Panc1 (cell line): ENCODE measurements at regions of chr6 and their contacts with region 1.

Region 1: GRCh38 chr6:35230950-35231349 is 17.2 kb downstream of the SCUBE3 start:
- DNase-seq: no peak
- ATAC-seq: no peak
- H3K4me3 ChIP-seq: no peak overlapping the region
- H3K27ac ChIP-seq: no peak overlapping the region
- H3K4me1 ChIP-seq: no peaks in the 10 kb centered on the region
- H3K27me3 ChIP-seq: no peaks in the 10 kb centered on the region
- CTCF ChIP-seq: no peak

Region 2: DNA sequence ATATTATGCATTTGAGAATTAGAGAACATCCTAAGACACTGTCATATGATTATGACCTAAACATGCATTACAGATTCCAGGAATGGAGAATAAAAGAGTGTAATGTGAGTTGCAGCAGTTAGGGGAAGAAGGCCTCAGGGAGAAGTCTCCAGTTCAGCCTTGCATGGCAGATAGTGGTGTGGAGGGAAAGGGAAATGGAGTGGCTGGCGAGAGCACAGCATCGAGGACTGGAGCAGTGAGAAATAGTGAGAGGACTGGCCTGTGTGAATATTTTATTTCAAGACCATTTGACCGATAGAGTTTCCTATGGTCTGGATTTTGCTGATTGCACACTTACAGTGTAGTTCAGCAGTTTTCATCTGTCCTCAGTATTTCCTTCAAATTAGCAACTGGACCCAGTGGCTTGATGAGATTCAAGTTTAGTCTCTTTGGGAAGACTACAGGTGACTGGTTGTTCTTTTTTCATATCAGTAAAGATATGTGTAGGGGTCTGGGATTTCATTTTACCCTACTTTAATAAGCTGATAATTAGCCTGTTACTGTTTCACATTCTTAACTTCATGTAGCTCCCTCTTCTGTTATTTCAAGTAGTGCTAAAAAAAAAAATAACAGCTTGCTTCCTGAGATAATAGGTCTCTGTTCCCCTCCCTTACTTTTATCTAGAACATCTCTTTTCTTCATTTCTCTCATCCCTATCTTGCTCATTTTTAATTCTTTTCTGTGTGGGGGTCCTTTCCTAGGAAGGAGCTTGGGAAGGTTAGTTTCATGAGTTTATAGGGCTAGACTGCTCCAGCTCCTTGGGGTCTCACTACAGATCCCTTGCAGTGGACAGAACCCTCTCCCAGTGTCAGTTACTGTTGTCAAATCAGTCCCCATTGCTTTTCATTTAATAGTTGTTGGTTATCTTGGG is 411.1 kb before region 1 on chr6:
- CTCF ChIA-PET with region 1: interaction called, 10 read pairs
- POLR2A ChIA-PET with region 1: no interaction called
- in situ Hi-C with region 1: no loop called
- intact Hi-C with region 1: no loop called
- DNase-seq: no peak
- ATAC-seq: no peak
- H3K4me3 ChIP-seq: no peak overlapping the region
- H3K27ac ChIP-seq: no peak overlapping the region
- H3K4me1 ChIP-seq: no peaks in the 10 kb centered on the region
- H3K27me3 ChIP-seq: no peaks in the 10 kb centered on the region
- CTCF ChIP-seq: no peak

Region 3: DNA sequence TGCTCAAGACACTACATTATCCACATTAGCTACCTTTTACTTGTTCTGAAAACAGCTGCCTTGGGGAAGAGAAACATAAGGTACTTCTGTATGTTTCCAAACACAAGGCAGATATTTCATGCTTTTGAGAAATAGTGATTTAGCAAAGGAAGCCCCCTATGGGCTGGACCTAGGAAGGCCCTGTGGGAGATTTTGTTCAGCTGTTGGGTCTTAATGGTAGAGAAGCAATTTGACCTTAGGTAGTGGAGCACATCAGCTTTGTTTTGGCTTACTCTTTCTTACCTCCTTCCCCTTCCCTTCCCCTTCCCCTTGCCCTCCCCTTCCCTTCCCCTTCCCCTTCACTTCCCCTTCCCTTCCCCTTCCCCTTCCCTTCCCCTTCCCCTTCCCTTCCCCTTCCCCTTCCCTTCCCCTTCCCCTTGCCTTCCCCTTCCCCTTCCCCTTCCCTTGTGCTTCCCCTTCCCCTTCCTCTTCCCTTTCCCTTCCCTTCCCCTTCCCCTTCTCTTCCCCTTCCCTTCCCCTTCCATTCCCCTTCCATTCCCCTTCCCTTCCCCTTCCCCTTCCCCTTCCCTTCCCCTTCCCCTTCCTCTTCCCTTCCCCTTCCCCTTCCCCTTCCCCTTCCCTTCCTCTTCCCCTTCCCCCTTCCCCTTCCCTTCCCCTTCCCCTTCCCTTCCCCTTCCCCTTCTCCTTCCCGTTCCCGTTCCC is 257.3 kb before region 1 on chr6:
- CTCF ChIA-PET with region 1: no interaction called
- POLR2A ChIA-PET with region 1: interaction called, 12 read pairs
- in situ Hi-C with region 1: no loop called
- intact Hi-C with region 1: no loop called
- DNase-seq: no peak
- ATAC-seq: no peak
- H3K4me3 ChIP-seq: no peak overlapping the region
- H3K27ac ChIP-seq: no peak overlapping the region
- H3K4me1 ChIP-seq: no peaks in the 10 kb centered on the region
- H3K27me3 ChIP-seq: no peaks in the 10 kb centered on the region
- CTCF ChIP-seq: peak; percentile 14; the same call in 1 of the 2 replicates

Region 4: DNA sequence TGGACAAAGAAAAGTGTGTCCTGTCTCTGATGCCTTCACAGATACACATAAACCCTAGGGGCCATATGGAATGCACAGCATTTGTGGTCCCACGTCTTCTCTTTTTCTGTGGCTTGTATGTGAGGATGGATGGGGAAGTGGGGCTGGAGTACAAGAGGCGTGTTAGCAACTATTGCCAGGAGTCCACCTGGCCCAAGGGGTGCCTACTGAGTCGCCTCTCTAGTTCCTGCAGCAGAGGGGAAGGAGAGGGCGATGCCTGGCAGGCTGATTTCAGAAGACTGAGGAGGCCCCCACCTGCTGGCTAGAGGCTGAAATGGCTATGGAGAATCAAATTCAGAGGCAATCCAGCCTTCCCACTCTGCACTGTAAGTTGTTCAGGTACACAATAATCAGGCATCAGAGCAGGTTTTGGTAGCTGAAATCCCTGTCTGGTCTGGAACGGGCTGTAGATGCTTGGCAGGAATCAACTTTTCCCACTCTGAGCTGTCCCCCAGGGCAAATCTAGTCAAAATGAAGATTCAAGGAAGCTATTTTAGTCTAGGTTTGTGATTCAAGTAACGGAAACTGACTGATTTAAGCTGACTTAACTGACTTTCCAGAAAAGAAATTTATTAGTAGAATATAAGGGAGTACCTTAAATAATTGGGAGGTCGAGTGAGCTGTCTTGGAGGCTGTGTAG is 96.5 kb after region 1 on chr6:
- CTCF ChIA-PET with region 1: no interaction called
- POLR2A ChIA-PET with region 1: no interaction called
- in situ Hi-C with region 1: no loop called
- intact Hi-C with region 1: no loop called
- DNase-seq: no peak
- ATAC-seq: peak; percentile 95
- H3K4me3 ChIP-seq: no peak overlapping the region
- H3K27ac ChIP-seq: no peak overlapping the region
- H3K4me1 ChIP-seq: no peaks in the 10 kb centered on the region
- H3K27me3 ChIP-seq: no peaks in the 10 kb centered on the region; the same call in 1 of the 2 replicates
- CTCF ChIP-seq: peak; percentile 86

Region 5: GRCh38 chr6:35452186-35453090 is 221.5 kb after region 1 on chr6 and contains the start of gene FANCE:
- CTCF ChIA-PET with region 1: no interaction called
- POLR2A ChIA-PET with region 1: no interaction called
- in situ Hi-C with region 1: no loop called
- intact Hi-C with region 1: no loop called
- DNase-seq: no peak
- ATAC-seq: peak; percentile 93
- H3K4me3 ChIP-seq: peak within 1 kb of the TSS; percentile 62 to 65
- H3K27ac ChIP-seq: peak within 1 kb of the TSS; percentile 51; the same call in 1 of the 2 replicates
- H3K4me1 ChIP-seq: peaks cover 18% of the 10 kb centered on the region
- H3K27me3 ChIP-seq: no peaks in the 10 kb centered on the region
- CTCF ChIP-seq: no peak
- total RNA-seq, gene FANCE: 4.3 TPM